Cardiac septum (tissue), 1 donor: ENCODE measurements at regions of chr5 and their contacts with region 1.

Region 1: DNA sequence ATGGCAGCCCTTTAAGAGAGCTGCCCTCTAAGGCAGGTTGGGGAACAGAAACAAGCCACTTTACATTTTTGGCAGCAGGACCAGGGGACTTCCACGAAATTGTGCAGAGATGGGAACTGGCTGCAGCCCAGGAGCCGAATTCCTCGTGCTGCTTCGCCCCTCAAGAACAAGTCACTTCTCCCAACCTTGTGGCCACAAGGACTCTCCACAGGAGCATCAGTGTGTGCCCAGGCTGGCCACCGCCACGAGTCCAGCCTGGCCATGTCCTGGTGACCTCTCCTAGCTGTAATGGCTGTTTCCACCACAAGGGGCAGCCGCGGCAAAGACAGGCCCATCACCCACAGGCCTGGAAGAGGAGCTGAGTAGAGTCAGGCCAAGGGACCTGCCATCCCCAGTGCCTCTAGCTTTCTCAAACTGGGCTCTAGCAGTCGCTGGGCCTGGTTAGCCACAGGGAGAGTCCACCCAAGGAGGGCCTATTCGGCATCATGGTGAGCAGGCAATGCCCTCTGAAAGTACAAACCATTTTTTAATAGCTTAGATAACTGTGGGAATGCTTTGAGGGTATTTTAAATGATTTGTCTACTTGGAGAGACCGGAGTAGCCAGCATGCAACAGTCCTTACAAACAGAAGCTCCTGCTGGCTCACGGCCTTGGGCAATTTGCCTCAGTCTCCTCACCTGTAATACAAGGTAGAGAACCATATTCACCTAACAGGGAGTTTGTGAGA is 129.0 kb downstream of the COL23A1 start:
- DNase-seq: peak; percentile 94

Region 2: GRCh38 chr5:178449163-178450070 is 11.8 kb before region 1 on chr5:
- intact Hi-C with region 1: no loop called
- DNase-seq: no peak

Region 3: DNA sequence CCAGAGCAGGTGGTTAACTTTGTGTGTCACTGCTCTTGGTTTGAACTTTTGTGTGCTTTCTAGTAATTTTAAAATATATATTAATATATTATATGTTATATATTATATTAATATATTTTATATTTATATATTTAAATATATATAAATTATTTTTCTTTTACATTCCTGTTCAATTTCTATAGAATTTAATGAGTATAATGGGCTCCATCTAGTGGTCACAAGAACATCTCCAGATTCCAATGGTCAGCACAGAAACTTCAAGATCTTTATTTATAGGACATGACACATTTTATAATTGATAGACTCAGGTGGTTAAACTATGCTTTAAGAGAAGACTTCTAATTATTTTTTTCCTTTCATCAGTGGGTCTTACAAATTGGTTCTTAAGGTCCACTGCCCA is 89.9 kb after region 1 on chr5:
- intact Hi-C with region 1: loop called (anchors 5 kb)
- DNase-seq: no peak

Region 4: DNA sequence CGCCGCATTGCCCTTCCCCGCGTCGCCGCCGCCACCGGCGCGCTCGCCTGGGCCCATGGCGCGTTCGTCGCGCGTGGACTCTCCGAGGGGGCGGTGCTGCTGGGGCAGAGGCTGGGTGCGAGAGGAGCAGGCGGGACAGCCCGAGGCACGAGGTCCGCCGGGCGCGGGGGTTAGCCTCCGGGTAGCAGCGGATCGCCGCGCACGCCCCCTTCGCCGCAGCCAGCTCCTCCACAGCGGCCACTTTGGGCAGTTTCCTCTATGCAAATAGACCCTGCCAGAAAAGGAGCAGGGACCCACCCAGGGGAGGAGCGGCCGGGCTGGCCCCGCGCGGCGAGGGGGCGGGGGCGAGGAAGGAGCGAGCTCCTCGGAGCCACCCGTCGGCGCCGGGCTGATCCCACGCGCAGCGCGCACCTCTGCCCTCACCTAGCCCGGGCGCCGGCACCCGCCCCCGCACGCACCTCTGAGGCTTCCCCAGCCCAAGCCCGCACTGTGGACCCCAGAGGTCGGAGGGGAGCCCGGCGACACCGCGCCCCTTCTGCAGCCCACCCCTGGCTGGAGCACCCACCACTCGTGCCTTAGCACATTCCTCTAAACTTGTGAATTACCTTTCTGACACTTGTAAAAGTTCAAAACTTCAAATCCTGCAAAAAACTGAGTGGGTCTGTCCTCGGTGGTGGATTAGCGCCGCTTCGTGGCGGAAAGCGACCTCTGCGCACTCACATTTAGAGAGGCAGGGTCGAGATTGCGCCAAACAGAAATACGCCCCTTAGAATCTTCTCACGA is 129.2 kb after region 1 on chr5 and contains the start of gene COL23A1:
- intact Hi-C with region 1: loop called (anchors 5 kb)
- DNase-seq: peak; percentile 90
- total RNA-seq, gene COL23A1: 16.5 TPM

Region 5: DNA sequence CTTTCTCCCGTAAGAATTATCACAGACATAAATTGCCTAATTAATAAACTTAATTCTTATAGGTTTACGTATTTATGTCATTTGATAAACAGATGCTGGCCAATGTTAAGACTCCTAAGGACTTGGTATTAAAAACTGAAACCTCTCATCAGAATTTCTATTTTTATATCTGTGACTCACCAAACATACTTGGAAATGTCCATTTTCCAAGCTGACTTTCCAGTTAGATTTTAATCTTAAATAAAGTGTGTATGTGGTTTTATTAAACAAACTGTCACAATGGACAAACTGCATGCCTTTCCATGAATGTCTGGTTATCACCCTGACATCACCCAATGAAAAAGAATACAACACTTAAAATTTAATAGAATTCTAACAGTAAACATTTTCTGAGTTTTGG is 141.6 kb after region 1 on chr5:
- intact Hi-C with region 1: no loop called
- DNase-seq: no peak